Activated T-helper 2 cell treated with anti-CD3 and anti-CD28 coated beads, Interferon-gamma antibody, Interleukin-2, Interleukin-4, amounts not matched to agents 10 μg/mL and 5 μg/mL and 100 μg/mL, durations not matched to agents 14 hours and 24 hours and 36 hours (primary cell): ENCODE measurements at regions of chr3 and their contacts with region 1.

Region 1: GRCh38 chr3:184711493-184712247 is at the start of gene MAGEF1:
- DNase-seq: peak; percentile 72
- H3K4me3 Mint-ChIP-seq: peak within 1 kb of the TSS; percentile 96
- H3K27ac Mint-ChIP-seq: peak within 1 kb of the TSS; percentile 75
- H3K4me1 Mint-ChIP-seq: peaks cover 30% of the 10 kb centered on the region
- H3K27me3 Mint-ChIP-seq: peaks cover 5% of the 10 kb centered on the region
- total RNA-seq, gene MAGEF1: 15.9 and 16.0 TPM in 2 replicates

Region 2: DNA sequence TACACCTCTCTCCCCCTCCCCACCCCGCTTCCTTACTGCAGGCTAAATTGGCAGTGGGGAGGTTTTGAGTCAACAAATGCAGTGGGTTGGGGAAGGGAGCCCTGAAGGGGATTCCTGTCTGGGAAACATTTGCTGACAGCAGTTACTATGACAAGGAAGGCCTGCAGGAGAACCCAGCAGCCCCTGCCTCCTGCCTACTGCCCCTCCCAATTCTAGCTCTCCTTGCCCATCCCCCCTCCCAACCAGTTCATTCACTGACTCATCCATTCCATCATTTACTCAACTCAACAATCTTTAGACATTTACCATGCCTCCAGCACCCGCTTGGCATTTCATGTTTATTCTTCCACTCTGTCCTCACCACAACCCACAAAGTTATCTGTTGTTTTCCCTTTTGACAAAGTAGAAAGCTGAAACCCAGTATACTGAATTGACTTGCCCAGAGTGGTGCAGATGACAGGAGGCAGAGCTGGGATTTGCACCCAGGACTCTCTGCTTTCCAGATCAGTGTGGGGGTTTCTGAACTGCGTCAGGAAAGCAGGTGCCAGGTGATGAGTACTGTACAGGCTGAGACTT is 74.8 kb before region 1 on chr3:
- intact Hi-C with region 1: loop called (anchors 1 kb)
- DNase-seq: peak; percentile 39
- H3K4me3 Mint-ChIP-seq: no peak overlapping the region
- H3K27ac Mint-ChIP-seq: no peak overlapping the region
- H3K4me1 Mint-ChIP-seq: peaks cover 6% of the 10 kb centered on the region
- H3K27me3 Mint-ChIP-seq: peaks cover 12% of the 10 kb centered on the region

Region 3: GRCh38 chr3:184656829-184657681 is 54.6 kb before region 1 on chr3:
- intact Hi-C with region 1: loop called (anchors 5 kb)
- DNase-seq: no peak
- H3K4me3 Mint-ChIP-seq: no peak overlapping the region
- H3K27ac Mint-ChIP-seq: peak overlapping the region; percentile 44
- H3K4me1 Mint-ChIP-seq: peaks cover 17% of the 10 kb centered on the region
- H3K27me3 Mint-ChIP-seq: peaks cover 3% of the 10 kb centered on the region

Region 4: GRCh38 chr3:184672977-184673870 is 38.4 kb before region 1 on chr3:
- intact Hi-C with region 1: no loop called
- DNase-seq: no peak
- H3K4me3 Mint-ChIP-seq: no peak overlapping the region
- H3K27ac Mint-ChIP-seq: no peak overlapping the region
- H3K4me1 Mint-ChIP-seq: no peaks in the 10 kb centered on the region
- H3K27me3 Mint-ChIP-seq: peaks cover 29% of the 10 kb centered on the region

Region 5: GRCh38 chr3:184874709-184875644 is 163.3 kb after region 1 on chr3:
- intact Hi-C with region 1: no loop called
- DNase-seq: no peak
- H3K4me3 Mint-ChIP-seq: no peak overlapping the region
- H3K27ac Mint-ChIP-seq: no peak overlapping the region
- H3K4me1 Mint-ChIP-seq: peaks cover 14% of the 10 kb centered on the region
- H3K27me3 Mint-ChIP-seq: no peaks in the 10 kb centered on the region